Transverse colon (tissue), 4 donors: ENCODE measurements at regions of chr9 and their contacts with region 1.

Region 1: GRCh38 chr9:134449221-134449894 is 123.1 kb downstream of the RXRA start:
- DNase-seq: peak; percentile 88
- H3K4me3 ChIP-seq: no peak overlapping the region
- H3K27ac ChIP-seq: no peak overlapping the region
- H3K4me1 ChIP-seq: no peaks in the 10 kb centered on the region
- H3K27me3 ChIP-seq: no peaks in the 10 kb centered on the region
- CTCF ChIP-seq: peak; percentile 75 to 93 (median 80)
- EP300 ChIP-seq: no peak
- POLR2A ChIP-seq: no peak

Region 2: GRCh38 chr9:133133681-133134418 is 1315.5 kb before region 1 on chr9:
- in situ Hi-C with region 1: no loop called
- intact Hi-C with region 1: no loop called
- DNase-seq: peak; percentile 95
- H3K4me3 ChIP-seq: no peak overlapping the region
- H3K27ac ChIP-seq: peak overlapping the region; percentile 93 to 97 (median 96)
- H3K4me1 ChIP-seq: peaks cover 53 to 73% (median 59%) of the 10 kb centered on the region in 4 donors
- H3K27me3 ChIP-seq: no peaks in the 10 kb centered on the region
- CTCF ChIP-seq: no peak
- EP300 ChIP-seq: peak; percentile 54
- POLR2A ChIP-seq: peak; percentile 86

Region 3: GRCh38 chr9:134163353-134164196 is 285.8 kb before region 1 on chr9:
- in situ Hi-C with region 1: loop called in 3 of 4 experiments (anchors 5 to 10 kb)
- intact Hi-C with region 1: no loop called
- DNase-seq: peak; percentile 71
- H3K4me3 ChIP-seq: peak overlapping the region in 1 of 4 donors; percentile 24
- H3K27ac ChIP-seq: no peak overlapping the region
- H3K4me1 ChIP-seq: peaks cover 4 to 20% (median 13%) of the 10 kb centered on the region in 4 donors
- H3K27me3 ChIP-seq: no peaks in the 10 kb centered on the region
- CTCF ChIP-seq: peak; percentile 54 to 92 (median 69)
- EP300 ChIP-seq: no peak
- POLR2A ChIP-seq: peak; percentile 44

Region 4: DNA sequence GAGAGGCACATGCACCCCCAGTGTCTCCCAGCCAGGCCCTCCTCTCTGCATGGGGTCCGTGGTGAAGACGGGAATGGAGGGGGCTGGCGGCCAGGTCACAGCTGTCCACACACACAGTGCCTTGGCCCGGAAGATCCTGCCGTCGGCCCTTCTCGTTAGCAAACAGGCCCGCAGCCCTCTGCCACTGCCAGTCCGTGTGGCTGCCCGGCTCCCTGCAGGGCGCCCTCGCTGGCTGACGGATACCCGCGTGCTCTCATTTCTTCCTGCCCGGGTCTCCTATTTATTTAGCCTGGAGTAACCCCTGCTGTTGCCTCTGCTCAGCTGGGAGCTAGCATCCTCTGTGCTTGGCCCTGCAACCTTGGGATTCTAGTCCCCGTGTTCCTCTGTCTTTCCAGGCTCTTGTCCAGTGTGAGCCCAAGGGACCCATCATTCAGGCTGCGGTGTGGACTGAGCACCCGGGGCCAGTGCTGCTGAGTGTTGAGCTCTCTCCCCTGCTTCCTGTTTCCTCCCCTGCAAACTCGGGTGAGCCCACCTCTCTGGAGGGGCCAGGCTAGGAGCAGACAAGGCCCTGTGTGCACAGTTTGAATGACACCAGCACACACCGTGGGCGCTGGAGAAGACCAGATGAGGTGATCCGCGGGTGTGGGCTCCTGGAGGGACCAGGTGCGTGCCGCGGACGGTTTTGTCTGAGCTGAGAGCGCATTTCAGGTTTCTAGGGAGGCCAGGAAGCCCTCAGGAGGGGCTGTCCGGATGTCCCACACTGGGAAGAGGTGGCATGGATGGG is 270.4 kb before region 1 on chr9:
- in situ Hi-C with region 1: loop called in 1 of 4 experiments (anchors 10 kb)
- intact Hi-C with region 1: no loop called
- DNase-seq: peak; percentile 7
- H3K4me3 ChIP-seq: no peak overlapping the region
- H3K27ac ChIP-seq: peak overlapping the region in 1 of 4 donors; percentile 10
- H3K4me1 ChIP-seq: peaks cover 0 to 20% (median 5%) of the 10 kb centered on the region in 4 donors
- H3K27me3 ChIP-seq: peaks cover 35% of the 10 kb centered on the region
- CTCF ChIP-seq: no peak
- EP300 ChIP-seq: no peak
- POLR2A ChIP-seq: no peak

Region 5: GRCh38 chr9:134656334-134657006 is 207.1 kb after region 1 on chr9:
- in situ Hi-C with region 1: no loop called
- intact Hi-C with region 1: no loop called
- DNase-seq: no peak
- H3K4me3 ChIP-seq: no peak overlapping the region
- H3K27ac ChIP-seq: no peak overlapping the region
- H3K4me1 ChIP-seq: peaks cover 21 to 42% (median 23%) of the 10 kb centered on the region in 4 donors
- H3K27me3 ChIP-seq: no peaks in the 10 kb centered on the region
- CTCF ChIP-seq: no peak
- EP300 ChIP-seq: no peak
- POLR2A ChIP-seq: no peak

Region 6: GRCh38 chr9:134689321-134690181 is 240.2 kb after region 1 on chr9:
- in situ Hi-C with region 1: no loop called
- intact Hi-C with region 1: loop called (anchors 5 kb)
- DNase-seq: peak; percentile 68
- H3K4me3 ChIP-seq: no peak overlapping the region
- H3K27ac ChIP-seq: peak overlapping the region in 2 of 4 donors; percentile 14 to 20
- H3K4me1 ChIP-seq: peaks cover 0 to 6% (median 5%) of the 10 kb centered on the region in 4 donors
- H3K27me3 ChIP-seq: no peaks in the 10 kb centered on the region
- CTCF ChIP-seq: peak; percentile 67 to 88 (median 79)
- EP300 ChIP-seq: no peak
- POLR2A ChIP-seq: no peak

Region 7: GRCh38 chr9:134738869-134739659 is 289.7 kb after region 1 on chr9:
- in situ Hi-C with region 1: no loop called
- intact Hi-C with region 1: loop called (anchors 2 kb)
- DNase-seq: peak; percentile 63
- H3K4me3 ChIP-seq: no peak overlapping the region
- H3K27ac ChIP-seq: peak overlapping the region in 2 of 4 donors; percentile 13
- H3K4me1 ChIP-seq: peaks cover 7 to 14% (median 13%) of the 10 kb centered on the region in 4 donors
- H3K27me3 ChIP-seq: no peaks in the 10 kb centered on the region
- CTCF ChIP-seq: peak; percentile 78 to 87 (median 86)
- EP300 ChIP-seq: no peak
- POLR2A ChIP-seq: no peak